Activated CD4-positive, alpha-beta T cell treated with anti-CD3 and anti-CD28 coated beads, Interleukin-2, amount 10 ng/mL, durations not matched to agents 7 days and 5 days (primary cell): ENCODE measurements at regions of chr5 and their contacts with region 1.

Region 1: GRCh38 chr5:172006321-172007174 is at the start of gene FBXW11:
- DNase-seq: peak; percentile 97
- H3K4me3 Mint-ChIP-seq: peak within 1 kb of the TSS; percentile 82
- H3K27ac Mint-ChIP-seq: peak within 1 kb of the TSS; percentile 96
- H3K4me1 Mint-ChIP-seq: peaks cover 53% of the 10 kb centered on the region
- H3K27me3 Mint-ChIP-seq: no peaks in the 10 kb centered on the region
- total RNA-seq, gene FBXW11: 27.3 to 27.5 TPM

Region 2: DNA sequence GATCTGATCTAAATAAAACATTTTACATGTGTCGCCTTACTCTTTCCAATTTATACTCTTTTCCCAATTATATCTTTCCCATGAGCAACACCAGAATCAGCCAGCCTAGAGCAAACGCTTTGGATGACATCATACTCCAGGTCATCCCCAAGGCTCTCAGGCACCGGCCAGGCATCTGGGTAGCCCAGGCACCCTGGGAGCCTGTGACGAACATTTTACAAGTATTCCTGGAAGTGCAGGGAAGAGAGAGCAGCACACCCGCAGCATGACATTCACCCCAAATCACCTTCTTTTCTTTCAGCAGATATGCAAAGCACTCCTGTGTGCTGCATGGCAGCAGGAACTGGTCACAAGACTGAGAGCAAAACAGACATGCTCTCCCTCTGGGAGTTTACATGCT is 296.6 kb before region 1 on chr5:
- CTCF ChIA-PET with region 1: no interaction called
- POLR2A ChIA-PET with region 1: no interaction called
- DNase-seq: no peak
- H3K4me3 Mint-ChIP-seq: no peak overlapping the region
- H3K27ac Mint-ChIP-seq: no peak overlapping the region
- H3K4me1 Mint-ChIP-seq: no peaks in the 10 kb centered on the region
- H3K27me3 Mint-ChIP-seq: peaks cover 2% of the 10 kb centered on the region

Region 3: DNA sequence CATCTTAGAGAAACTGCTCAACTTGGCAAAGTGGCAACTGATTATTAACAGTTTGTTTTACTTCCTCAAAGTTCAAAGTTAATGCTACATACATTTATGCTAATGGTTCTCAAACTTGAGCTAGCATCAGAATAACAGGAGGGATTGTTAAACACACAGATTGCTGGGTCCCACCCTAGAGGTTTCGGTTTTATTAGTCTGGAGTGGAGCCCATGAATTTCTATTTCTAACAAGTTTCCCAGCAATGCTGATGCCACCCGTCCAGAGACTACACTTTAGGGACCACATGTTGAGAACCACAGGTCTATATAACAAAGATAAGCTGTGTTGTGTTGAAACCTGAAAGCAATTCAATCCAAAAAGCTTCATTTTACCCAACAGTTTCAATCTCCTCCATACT is 95.4 kb before region 1 on chr5:
- CTCF ChIA-PET with region 1: interaction called, 23 read pairs
- POLR2A ChIA-PET with region 1: no interaction called
- DNase-seq: no peak
- H3K4me3 Mint-ChIP-seq: no peak overlapping the region
- H3K27ac Mint-ChIP-seq: no peak overlapping the region
- H3K4me1 Mint-ChIP-seq: peaks cover 36% of the 10 kb centered on the region
- H3K27me3 Mint-ChIP-seq: no peaks in the 10 kb centered on the region

Region 4: GRCh38 chr5:172086194-172087019 is 79.9 kb after region 1 on chr5:
- CTCF ChIA-PET with region 1: no interaction called
- POLR2A ChIA-PET with region 1: no interaction called
- DNase-seq: no peak
- H3K4me3 Mint-ChIP-seq: no peak overlapping the region
- H3K27ac Mint-ChIP-seq: peak overlapping the region; percentile 72
- H3K4me1 Mint-ChIP-seq: no peaks in the 10 kb centered on the region
- H3K27me3 Mint-ChIP-seq: no peaks in the 10 kb centered on the region